Naive thymus-derived CD4-positive, alpha-beta T cell (primary cell): ENCODE measurements at regions of chr6 and their contacts with region 1.

Region 1: GRCh38 chr6:27479319-27480182 is 6.6 kb upstream of the ZNF184 start:
- DNase-seq: peak; percentile 84 to 97 (median 95)
- ATAC-seq: peak; percentile 83
- H3K4me3 ChIP-seq: peak overlapping the region; percentile 95
- H3K4me3 Mint-ChIP-seq: no peak overlapping the region
- H3K27ac ChIP-seq: peak overlapping the region; percentile 97
- H3K27ac Mint-ChIP-seq: no peak overlapping the region
- H3K4me1 ChIP-seq: peaks cover 9 to 12% of the 10 kb centered on the region in 2 donors
- H3K4me1 Mint-ChIP-seq: peaks cover 0 to 9% (median 5%) of the 10 kb centered on the region in 7 donors
- H3K27me3 ChIP-seq: no peaks in the 10 kb centered on the region
- H3K27me3 Mint-ChIP-seq: peaks cover 0 to 17% (median 0%) of the 10 kb centered on the region in 5 donors

Region 2: GRCh38 chr6:26175428-26176181 is 1303.9 kb before region 1 on chr6:
- CTCF ChIA-PET with region 1: no interaction called
- POLR2A ChIA-PET with region 1: no interaction called
- intact Hi-C with region 1: loop called (anchors 5 to 10 kb)
- DNase-seq: peak in 7 of 9 donors; percentile 57 to 75 (median 66)
- ATAC-seq: peak; percentile 32
- H3K4me3 ChIP-seq: no peak overlapping the region
- H3K4me3 Mint-ChIP-seq: peak overlapping the region in 7 of 10 donors; percentile 15 to 63 (median 43)
- H3K27ac ChIP-seq: no peak overlapping the region
- H3K27ac Mint-ChIP-seq: peak overlapping the region; percentile 32 to 89 (median 76)
- H3K4me1 ChIP-seq: peaks cover 16 to 19% of the 10 kb centered on the region in 2 donors
- H3K4me1 Mint-ChIP-seq: peaks cover 20 to 51% (median 39%) of the 10 kb centered on the region in 7 donors
- H3K27me3 ChIP-seq: no peaks in the 10 kb centered on the region
- H3K27me3 Mint-ChIP-seq: no peaks in the 10 kb centered on the region

Region 3: GRCh38 chr6:27126815-27127537 is 352.6 kb before region 1 on chr6:
- CTCF ChIA-PET with region 1: no interaction called
- POLR2A ChIA-PET with region 1: interaction called, 10 read pairs
- intact Hi-C with region 1: loop called (anchors 1 to 2 kb)
- DNase-seq: peak; percentile 46 to 82 (median 77)
- ATAC-seq: peak; percentile 89
- H3K4me3 ChIP-seq: peak overlapping the region; percentile 33
- H3K4me3 Mint-ChIP-seq: peak overlapping the region; percentile 35 to 90 (median 77)
- H3K27ac ChIP-seq: no peak overlapping the region
- H3K27ac Mint-ChIP-seq: peak overlapping the region; percentile 41 to 93 (median 82)
- H3K4me1 ChIP-seq: peaks cover 4 to 6% of the 10 kb centered on the region in 2 donors
- H3K4me1 Mint-ChIP-seq: peaks cover 6 to 51% (median 15%) of the 10 kb centered on the region in 7 donors
- H3K27me3 ChIP-seq: no peaks in the 10 kb centered on the region
- H3K27me3 Mint-ChIP-seq: no peaks in the 10 kb centered on the region

Region 4: GRCh38 chr6:27332692-27333641 is 146.6 kb before region 1 on chr6:
- CTCF ChIA-PET with region 1: no interaction called
- POLR2A ChIA-PET with region 1: no interaction called
- intact Hi-C with region 1: loop called in 1 of 2 experiments (anchors 1 kb)
- DNase-seq: peak in 8 of 9 donors; percentile 18 to 79 (median 68)
- ATAC-seq: peak; percentile 74
- H3K4me3 ChIP-seq: peak overlapping the region; percentile 60
- H3K4me3 Mint-ChIP-seq: peak overlapping the region; percentile 67 to 94 (median 87)
- H3K27ac ChIP-seq: no peak overlapping the region
- H3K27ac Mint-ChIP-seq: peak overlapping the region; percentile 0 to 97 (median 84)
- H3K4me1 ChIP-seq: peaks cover 0 to 3% of the 10 kb centered on the region in 2 donors
- H3K4me1 Mint-ChIP-seq: peaks cover 7 to 21% (median 13%) of the 10 kb centered on the region in 7 donors
- H3K27me3 ChIP-seq: peaks cover 0 to 8% of the 10 kb centered on the region in 2 donors
- H3K27me3 Mint-ChIP-seq: peaks cover 21 to 53% (median 25%) of the 10 kb centered on the region in 5 donors

Region 5: DNA sequence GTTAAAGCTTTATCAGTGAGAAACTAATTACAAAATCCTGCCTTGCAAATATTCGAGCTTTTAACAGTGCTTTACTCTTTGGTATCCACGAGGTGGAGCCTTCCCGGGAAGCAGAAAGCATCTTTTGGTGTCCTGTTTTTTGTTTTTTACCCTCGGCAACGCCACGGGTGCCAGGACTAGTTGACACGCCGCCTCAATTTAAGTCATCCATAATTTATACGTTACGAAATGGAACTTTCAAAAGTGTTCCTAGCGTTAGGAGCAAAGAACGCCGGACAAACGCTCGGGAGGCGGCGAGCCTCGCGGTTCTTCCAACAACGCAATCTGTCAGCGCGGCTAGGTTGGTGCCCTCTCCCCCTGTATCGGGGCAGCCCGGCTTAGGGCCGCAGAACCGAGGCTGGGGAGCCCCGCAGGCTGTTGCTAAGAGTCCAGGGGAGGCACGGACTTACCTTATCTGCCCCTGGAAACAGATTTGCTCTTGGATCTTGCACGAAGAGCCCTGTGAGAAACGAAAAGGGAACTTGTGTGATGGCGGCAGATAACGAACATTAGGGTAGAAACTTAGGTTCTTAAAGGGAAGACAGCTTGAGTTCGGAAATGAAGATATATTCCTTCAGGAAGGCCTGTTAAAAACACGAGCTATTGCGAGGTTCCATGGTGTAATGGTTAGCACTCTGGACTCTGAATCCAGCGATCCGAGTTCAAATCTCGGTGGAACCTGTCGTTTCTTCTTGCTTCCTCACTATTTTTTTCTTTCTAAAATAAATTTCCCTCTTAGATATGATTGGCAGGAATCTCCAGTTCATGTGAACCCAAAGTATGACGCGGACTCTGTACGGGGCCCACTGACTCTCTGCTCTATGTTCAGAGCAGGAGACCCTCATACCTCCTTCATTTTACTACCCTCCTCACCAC is 39.6 kb after region 1 on chr6:
- CTCF ChIA-PET with region 1: interaction called, 4 read pairs
- POLR2A ChIA-PET with region 1: interaction called, 20 read pairs
- intact Hi-C with region 1: loop called (anchors 1 kb)
- DNase-seq: peak; percentile 34 to 79 (median 68)
- ATAC-seq: peak; percentile 81
- H3K4me3 ChIP-seq: peak overlapping the region; percentile 96
- H3K4me3 Mint-ChIP-seq: peak overlapping the region; percentile 84 to 97 (median 91)
- H3K27ac ChIP-seq: peak overlapping the region; percentile 67
- H3K27ac Mint-ChIP-seq: peak overlapping the region; percentile 68 to 94 (median 84)
- H3K4me1 ChIP-seq: peaks cover 7 to 11% of the 10 kb centered on the region in 2 donors
- H3K4me1 Mint-ChIP-seq: peaks cover 0 to 31% (median 18%) of the 10 kb centered on the region in 7 donors
- H3K27me3 ChIP-seq: peaks cover 0 to 3% of the 10 kb centered on the region in 2 donors
- H3K27me3 Mint-ChIP-seq: peaks cover 0 to 40% (median 22%) of the 10 kb centered on the region in 5 donors

Region 6: DNA sequence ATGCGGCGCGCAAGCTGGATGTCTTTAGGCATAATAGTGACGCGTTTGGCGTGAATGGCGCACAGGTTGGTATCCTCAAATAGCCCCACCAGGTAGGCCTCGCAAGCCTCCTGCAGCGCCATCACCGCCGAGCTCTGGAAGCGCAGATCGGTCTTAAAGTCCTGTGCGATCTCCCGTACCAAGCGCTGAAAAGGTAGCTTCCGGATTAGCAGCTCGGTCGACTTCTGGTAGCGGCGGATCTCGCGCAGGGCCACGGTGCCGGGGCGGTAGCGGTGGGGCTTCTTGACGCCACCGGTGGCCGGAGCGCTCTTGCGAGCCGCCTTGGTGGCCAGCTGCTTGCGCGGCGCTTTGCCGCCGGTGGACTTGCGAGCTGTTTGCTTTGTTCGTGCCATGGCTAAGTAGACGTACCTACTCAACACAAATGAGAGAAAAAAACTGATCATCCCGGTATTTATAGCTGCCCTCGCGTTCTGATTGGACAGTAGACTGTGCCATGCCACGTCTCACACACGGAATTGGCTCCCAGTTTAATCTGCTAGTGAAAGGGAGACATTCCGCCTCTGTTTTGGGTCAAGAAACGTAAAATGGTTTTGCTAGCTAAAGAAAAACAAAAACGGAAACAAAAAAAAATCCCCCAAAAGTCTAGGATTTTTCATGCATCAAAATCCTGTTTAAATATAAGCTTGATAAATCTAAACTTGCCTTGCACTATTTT is 392.5 kb after region 1 on chr6:
- CTCF ChIA-PET with region 1: no interaction called
- POLR2A ChIA-PET with region 1: interaction called, 11 read pairs
- intact Hi-C with region 1: no loop called
- DNase-seq: peak; percentile 68 to 97 (median 94)
- ATAC-seq: peak; percentile 88
- H3K4me3 ChIP-seq: peak overlapping the region; percentile 69
- H3K4me3 Mint-ChIP-seq: peak overlapping the region; percentile 83 to 99 (median 94)
- H3K27ac ChIP-seq: peak overlapping the region; percentile 84
- H3K27ac Mint-ChIP-seq: peak overlapping the region; percentile 95 to 98 (median 97)
- H3K4me1 ChIP-seq: peaks cover under 1 to 19% of the 10 kb centered on the region in 2 donors
- H3K4me1 Mint-ChIP-seq: peaks cover 15 to 69% (median 42%) of the 10 kb centered on the region in 7 donors
- H3K27me3 ChIP-seq: no peaks in the 10 kb centered on the region
- H3K27me3 Mint-ChIP-seq: peaks cover 0 to 8% (median 0%) of the 10 kb centered on the region in 5 donors

Region 7: DNA sequence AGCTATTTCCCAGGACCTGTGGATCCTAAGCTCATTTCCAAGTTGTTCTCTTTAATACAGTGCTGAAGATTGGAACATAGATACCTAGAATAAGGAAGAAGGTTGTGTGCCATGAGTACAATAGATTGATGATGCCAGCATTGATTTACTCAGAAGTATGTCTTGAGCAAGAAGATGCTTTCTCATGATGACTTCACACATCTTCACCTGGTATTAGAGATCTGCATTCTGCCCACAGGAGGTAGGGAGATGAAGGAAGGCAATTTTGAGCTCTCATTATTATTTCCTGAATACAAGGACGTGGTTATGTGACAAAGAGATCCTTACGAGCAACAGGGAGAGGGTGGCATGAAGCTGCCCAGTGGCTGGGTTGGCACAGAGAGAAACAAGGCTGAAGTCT is 580.9 kb after region 1 on chr6:
- CTCF ChIA-PET with region 1: no interaction called
- POLR2A ChIA-PET with region 1: no interaction called
- intact Hi-C with region 1: no loop called
- DNase-seq: no peak
- ATAC-seq: no peak
- H3K4me3 ChIP-seq: no peak overlapping the region
- H3K4me3 Mint-ChIP-seq: no peak overlapping the region
- H3K27ac ChIP-seq: no peak overlapping the region
- H3K27ac Mint-ChIP-seq: no peak overlapping the region
- H3K4me1 ChIP-seq: no peaks in the 10 kb centered on the region
- H3K4me1 Mint-ChIP-seq: peaks cover 0 to 4% (median 0%) of the 10 kb centered on the region in 7 donors
- H3K27me3 ChIP-seq: peaks cover 0 to 4% of the 10 kb centered on the region in 2 donors
- H3K27me3 Mint-ChIP-seq: peaks cover 9 to 58% (median 47%) of the 10 kb centered on the region in 5 donors

Region 8: DNA sequence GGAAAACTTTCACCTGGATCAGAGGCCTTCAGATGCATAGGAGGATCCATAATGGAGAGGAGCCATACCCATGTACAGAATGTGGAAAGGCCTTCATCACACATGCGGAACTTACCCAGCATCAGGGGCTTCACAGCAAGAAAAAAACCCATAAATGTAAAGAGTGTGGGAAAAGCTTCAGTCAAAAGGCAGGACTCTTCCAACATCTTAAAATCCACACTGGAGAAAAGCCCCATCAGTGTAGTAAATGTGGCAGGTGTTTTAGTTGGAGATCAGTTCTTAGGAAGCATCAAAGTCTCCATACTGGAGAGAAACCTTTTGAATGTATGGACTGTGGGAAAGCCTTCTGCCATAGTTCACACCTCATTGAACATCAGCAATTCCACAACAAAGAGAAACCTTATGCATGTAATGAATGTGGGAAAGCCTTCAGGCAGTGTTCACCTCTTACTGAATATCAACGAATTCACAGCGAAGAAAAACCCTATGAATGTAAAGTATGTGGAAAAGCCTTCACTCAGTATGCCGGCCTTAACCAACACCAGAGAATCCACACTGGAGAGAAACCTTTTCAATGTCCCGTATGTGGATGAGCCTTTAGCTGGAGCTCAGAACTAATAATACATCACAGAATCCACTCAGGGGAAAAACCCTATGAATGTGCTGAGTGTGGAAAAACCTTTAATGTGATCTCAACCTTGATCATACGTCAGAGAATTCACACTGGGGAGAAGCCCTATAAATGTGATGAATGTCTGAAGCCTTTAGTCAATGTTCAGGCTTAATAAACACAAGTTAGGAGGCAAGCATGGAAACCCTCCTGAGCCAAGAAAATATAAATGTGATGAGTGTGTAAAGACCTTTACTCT is 708.8 kb after region 1 on chr6:
- CTCF ChIA-PET with region 1: no interaction called
- POLR2A ChIA-PET with region 1: no interaction called
- intact Hi-C with region 1: no loop called
- DNase-seq: no peak
- ATAC-seq: no peak
- H3K4me3 ChIP-seq: no peak overlapping the region
- H3K4me3 Mint-ChIP-seq: no peak overlapping the region
- H3K27ac ChIP-seq: no peak overlapping the region
- H3K27ac Mint-ChIP-seq: no peak overlapping the region
- H3K4me1 ChIP-seq: no peaks in the 10 kb centered on the region
- H3K4me1 Mint-ChIP-seq: peaks cover 0 to 1% (median 0%) of the 10 kb centered on the region in 7 donors
- H3K27me3 ChIP-seq: no peaks in the 10 kb centered on the region
- H3K27me3 Mint-ChIP-seq: peaks cover 0 to 32% (median 6%) of the 10 kb centered on the region in 5 donors

Region 9: DNA sequence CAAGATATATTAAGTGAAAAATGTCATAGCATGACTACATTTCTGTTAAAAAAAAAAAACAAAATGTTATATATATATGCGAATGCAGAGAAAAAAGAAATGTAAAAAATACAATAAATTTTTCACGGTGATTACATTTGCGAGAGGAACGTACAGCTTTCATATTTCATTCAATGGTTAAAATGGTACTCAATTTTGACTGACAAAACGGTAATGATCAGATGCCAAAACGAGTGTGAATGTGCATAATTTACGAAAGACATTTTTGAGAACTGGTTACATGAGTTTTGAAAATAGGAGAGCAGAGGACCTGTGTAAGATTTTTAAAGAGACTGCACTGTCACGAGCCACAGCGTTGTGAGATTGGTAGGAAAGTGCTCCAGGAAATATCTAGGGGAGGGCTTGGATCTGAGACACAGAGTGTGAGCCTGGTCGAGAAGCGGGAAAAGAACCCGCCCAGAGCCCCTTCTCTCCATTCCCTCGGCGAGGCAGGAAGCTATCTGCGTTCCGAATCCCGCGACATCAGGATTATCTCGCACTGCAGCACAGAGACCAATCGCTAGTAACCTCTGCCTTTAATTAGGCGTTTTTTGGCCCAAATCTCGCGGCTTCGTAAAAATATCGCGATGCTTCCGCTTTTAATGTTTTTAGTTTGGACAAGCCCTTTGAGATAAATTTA is 1415.7 kb after region 1 on chr6:
- CTCF ChIA-PET with region 1: no interaction called
- POLR2A ChIA-PET with region 1: interaction called, 3 read pairs
- intact Hi-C with region 1: loop called (anchors 1 to 2 kb)
- DNase-seq: peak; percentile 72 to 95 (median 91)
- ATAC-seq: peak; percentile 83
- H3K4me3 ChIP-seq: peak overlapping the region; percentile 82
- H3K4me3 Mint-ChIP-seq: peak overlapping the region; percentile 92 to 100 (median 98)
- H3K27ac ChIP-seq: peak overlapping the region; percentile 99
- H3K27ac Mint-ChIP-seq: peak overlapping the region; percentile 98 to 100 (median 100)
- H3K4me1 ChIP-seq: peaks cover 5 to 6% of the 10 kb centered on the region in 2 donors
- H3K4me1 Mint-ChIP-seq: peaks cover 0 to 32% (median 14%) of the 10 kb centered on the region in 7 donors
- H3K27me3 ChIP-seq: no peaks in the 10 kb centered on the region
- H3K27me3 Mint-ChIP-seq: peaks cover 0 to 15% (median 0%) of the 10 kb centered on the region in 5 donors